ENCODE measurements at regions of chr12 and their contacts with region 1.

Region 1: DNA sequence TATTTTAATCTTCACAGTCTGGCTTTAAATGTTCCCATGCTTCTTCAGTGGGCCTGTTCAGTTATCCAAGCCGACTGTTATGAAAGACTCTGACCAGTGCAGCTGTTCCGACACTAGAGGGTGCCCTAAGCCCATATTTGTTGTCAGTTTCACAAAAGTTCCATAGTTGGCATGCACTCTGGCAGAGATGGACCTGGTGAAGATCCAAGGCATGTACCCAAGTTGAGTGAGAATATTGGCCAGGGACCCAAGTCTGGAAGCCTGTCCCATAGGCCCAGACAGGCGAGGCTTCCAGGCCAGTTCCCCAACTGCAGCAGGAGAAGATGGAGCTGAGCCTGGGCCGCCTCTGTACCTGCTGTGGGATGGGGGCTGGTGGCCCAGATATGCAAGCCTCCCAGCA is 27.4 kb upstream of the GUCY2C start:
- DNase-seq: peak; percentile 21 to 80 (median 46)
- ATAC-seq: peak; percentile 76
- H3K4me3 ChIP-seq: no peak overlapping the region
- H3K4me3 Mint-ChIP-seq: no peak overlapping the region
- H3K27ac ChIP-seq: no peak overlapping the region
- H3K27ac Mint-ChIP-seq: no peak overlapping the region
- H3K4me1 ChIP-seq: no peaks in the 10 kb centered on the region
- H3K4me1 Mint-ChIP-seq: peaks cover 5% of the 10 kb centered on the region
- H3K27me3 ChIP-seq: no peaks in the 10 kb centered on the region
- H3K27me3 Mint-ChIP-seq: peaks cover 11% of the 10 kb centered on the region
- CTCF ChIP-seq: peak; percentile 81

Region 2: DNA sequence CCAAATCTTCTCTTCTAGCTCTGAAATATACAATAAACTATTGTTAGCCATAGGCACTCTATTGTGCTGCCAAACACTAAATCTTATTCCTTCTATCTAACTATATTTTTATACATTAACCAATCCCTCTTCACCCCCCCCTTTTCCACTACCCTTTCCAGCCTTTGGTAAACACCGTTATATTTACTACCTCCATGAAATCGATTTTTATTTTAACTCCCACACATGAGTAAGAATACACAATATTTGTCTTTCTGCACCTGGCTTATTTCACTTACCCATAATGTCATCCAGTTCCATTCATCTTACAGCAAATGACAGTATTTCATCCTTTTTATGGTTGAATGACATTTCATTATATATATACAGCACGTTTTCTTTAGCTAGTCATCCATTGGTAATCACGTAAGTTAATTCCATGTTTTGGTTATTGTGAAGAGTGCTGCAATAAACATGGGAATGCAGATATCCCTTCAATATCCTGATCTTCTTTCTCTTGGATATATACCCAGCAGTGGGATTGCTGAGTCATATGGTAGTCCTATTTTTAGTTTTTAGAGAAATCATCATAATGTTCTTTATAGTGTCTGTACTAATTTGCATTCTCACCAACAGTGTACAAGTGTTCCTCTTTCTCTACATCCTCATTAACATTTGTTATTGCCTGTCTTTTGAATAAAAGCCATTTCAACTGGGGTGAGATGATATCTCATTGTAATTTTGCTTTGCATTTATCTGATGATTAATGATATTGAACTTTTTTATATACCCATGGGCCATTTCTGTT is 121.9 kb before region 1 on chr12:
- CTCF ChIA-PET with region 1: no interaction called
- POLR2A ChIA-PET with region 1: no interaction called
- intact Hi-C with region 1: no loop called
- DNase-seq: no peak
- ATAC-seq: no peak
- H3K4me3 ChIP-seq: no peak overlapping the region
- H3K4me3 Mint-ChIP-seq: no peak overlapping the region
- H3K27ac ChIP-seq: no peak overlapping the region
- H3K27ac Mint-ChIP-seq: no peak overlapping the region
- H3K4me1 ChIP-seq: no peaks in the 10 kb centered on the region
- H3K4me1 Mint-ChIP-seq: no peaks in the 10 kb centered on the region
- H3K27me3 ChIP-seq: no peaks in the 10 kb centered on the region
- H3K27me3 Mint-ChIP-seq: peaks cover 22% of the 10 kb centered on the region
- CTCF ChIP-seq: no peak

Region 3: DNA sequence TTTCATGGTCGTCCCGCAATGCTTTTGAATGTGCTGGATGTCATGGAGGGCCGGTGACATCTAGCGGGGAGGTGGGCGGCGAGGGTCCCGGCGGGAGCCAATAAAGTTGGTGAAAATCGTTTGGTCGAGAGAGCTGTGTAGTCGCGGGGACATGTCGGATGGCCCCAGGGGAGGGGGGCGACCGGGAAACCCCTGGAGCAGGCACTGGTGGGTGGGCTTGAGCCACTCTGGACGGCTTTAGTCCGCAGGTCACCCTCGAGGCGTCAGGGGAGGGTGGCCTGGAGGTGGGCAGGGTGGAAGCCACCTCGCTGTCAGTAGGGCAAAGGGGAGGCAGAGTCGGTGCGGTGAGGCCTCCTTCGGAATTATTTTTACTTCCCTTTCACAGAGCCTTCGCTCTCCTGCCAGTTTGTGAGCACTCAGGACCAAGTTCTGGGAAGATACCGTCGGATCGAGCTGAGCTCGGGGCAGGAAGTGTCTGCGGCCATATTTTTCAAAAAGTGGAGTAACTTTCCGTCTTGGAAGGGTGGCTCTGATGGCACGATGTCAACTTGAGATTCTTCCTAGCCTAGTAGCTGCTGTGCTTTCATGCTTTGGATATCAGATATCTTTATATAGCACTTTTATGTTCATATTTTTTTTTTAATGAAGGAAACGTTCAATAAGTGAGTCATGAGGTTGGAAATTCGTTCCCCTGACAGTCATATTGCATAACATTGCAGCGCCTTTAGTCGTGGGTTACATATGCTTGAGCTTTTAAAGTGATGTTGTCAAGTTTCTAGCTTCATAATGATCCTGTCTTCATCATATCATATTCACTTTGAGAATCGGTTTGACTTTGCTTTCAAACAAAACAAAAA is 51.4 kb after region 1 on chr12:
- CTCF ChIA-PET with region 1: interaction called, 3 read pairs
- POLR2A ChIA-PET with region 1: interaction called, 13 read pairs
- intact Hi-C with region 1: loop called in 1 of 2 experiments (anchors 5 kb)
- DNase-seq: peak in 11 of 14 experiments; percentile 2 to 56 (median 14)
- ATAC-seq: no peak
- H3K4me3 ChIP-seq: peak overlapping the region; percentile 83
- H3K4me3 Mint-ChIP-seq: peak overlapping the region; percentile 97
- H3K27ac ChIP-seq: peak overlapping the region; percentile 61 to 79
- H3K27ac Mint-ChIP-seq: peak overlapping the region; percentile 100
- H3K4me1 ChIP-seq: peaks cover 28% of the 10 kb centered on the region
- H3K4me1 Mint-ChIP-seq: peaks cover 63% of the 10 kb centered on the region
- H3K27me3 ChIP-seq: no peaks in the 10 kb centered on the region
- H3K27me3 Mint-ChIP-seq: no peaks in the 10 kb centered on the region
- CTCF ChIP-seq: no peak

Region 4: GRCh38 chr12:15151161-15152120 is 427.7 kb after region 1 on chr12:
- CTCF ChIA-PET with region 1: no interaction called
- POLR2A ChIA-PET with region 1: no interaction called
- intact Hi-C with region 1: no loop called
- DNase-seq: peak in 1 of 14 experiments; percentile 5
- ATAC-seq: no peak
- H3K4me3 ChIP-seq: no peak overlapping the region
- H3K4me3 Mint-ChIP-seq: no peak overlapping the region
- H3K27ac ChIP-seq: no peak overlapping the region
- H3K27ac Mint-ChIP-seq: no peak overlapping the region
- H3K4me1 ChIP-seq: no peaks in the 10 kb centered on the region
- H3K4me1 Mint-ChIP-seq: no peaks in the 10 kb centered on the region
- H3K27me3 ChIP-seq: no peaks in the 10 kb centered on the region
- H3K27me3 Mint-ChIP-seq: peaks cover 21% of the 10 kb centered on the region
- CTCF ChIP-seq: peak; percentile 48

Region 5: GRCh38 chr12:15220994-15221885 is 497.5 kb after region 1 on chr12 and contains the start of gene RERG:
- CTCF ChIA-PET with region 1: interaction called, 8 read pairs
- POLR2A ChIA-PET with region 1: no interaction called
- intact Hi-C with region 1: loop called (anchors 1 to 2 kb)
- DNase-seq: peak; percentile 50 to 86 (median 68)
- ATAC-seq: peak; percentile 99
- H3K4me3 ChIP-seq: peak within 1 kb of the TSS; percentile 49
- H3K4me3 Mint-ChIP-seq: peak within 1 kb of the TSS; percentile 71
- H3K27ac ChIP-seq: no peak within 1 kb of the TSS
- H3K27ac Mint-ChIP-seq: no peak within 1 kb of the TSS
- H3K4me1 ChIP-seq: peaks cover 10% of the 10 kb centered on the region
- H3K4me1 Mint-ChIP-seq: peaks cover 13% of the 10 kb centered on the region
- H3K27me3 ChIP-seq: peaks cover 7 to 34% of the 10 kb centered on the region in 2 experiments
- H3K27me3 Mint-ChIP-seq: peaks cover 42% of the 10 kb centered on the region
- CTCF ChIP-seq: peak; percentile 94
- total RNA-seq, gene RERG: not detected

Region 6: GRCh38 chr12:15522565-15523187 is 798.9 kb after region 1 on chr12:
- CTCF ChIA-PET with region 1: no interaction called
- POLR2A ChIA-PET with region 1: no interaction called
- intact Hi-C with region 1: loop called in 1 of 2 experiments (anchors 10 kb)
- DNase-seq: peak in 3 of 14 experiments; percentile 30 to 39 (median 34)
- ATAC-seq: no peak
- H3K4me3 ChIP-seq: no peak overlapping the region
- H3K4me3 Mint-ChIP-seq: no peak overlapping the region
- H3K27ac ChIP-seq: no peak overlapping the region
- H3K27ac Mint-ChIP-seq: no peak overlapping the region
- H3K4me1 ChIP-seq: no peaks in the 10 kb centered on the region
- H3K4me1 Mint-ChIP-seq: no peaks in the 10 kb centered on the region
- H3K27me3 ChIP-seq: peaks cover 2 to 4% of the 10 kb centered on the region in 2 experiments
- H3K27me3 Mint-ChIP-seq: peaks cover 53% of the 10 kb centered on the region
- CTCF ChIP-seq: peak; percentile 29

Region 7: DNA sequence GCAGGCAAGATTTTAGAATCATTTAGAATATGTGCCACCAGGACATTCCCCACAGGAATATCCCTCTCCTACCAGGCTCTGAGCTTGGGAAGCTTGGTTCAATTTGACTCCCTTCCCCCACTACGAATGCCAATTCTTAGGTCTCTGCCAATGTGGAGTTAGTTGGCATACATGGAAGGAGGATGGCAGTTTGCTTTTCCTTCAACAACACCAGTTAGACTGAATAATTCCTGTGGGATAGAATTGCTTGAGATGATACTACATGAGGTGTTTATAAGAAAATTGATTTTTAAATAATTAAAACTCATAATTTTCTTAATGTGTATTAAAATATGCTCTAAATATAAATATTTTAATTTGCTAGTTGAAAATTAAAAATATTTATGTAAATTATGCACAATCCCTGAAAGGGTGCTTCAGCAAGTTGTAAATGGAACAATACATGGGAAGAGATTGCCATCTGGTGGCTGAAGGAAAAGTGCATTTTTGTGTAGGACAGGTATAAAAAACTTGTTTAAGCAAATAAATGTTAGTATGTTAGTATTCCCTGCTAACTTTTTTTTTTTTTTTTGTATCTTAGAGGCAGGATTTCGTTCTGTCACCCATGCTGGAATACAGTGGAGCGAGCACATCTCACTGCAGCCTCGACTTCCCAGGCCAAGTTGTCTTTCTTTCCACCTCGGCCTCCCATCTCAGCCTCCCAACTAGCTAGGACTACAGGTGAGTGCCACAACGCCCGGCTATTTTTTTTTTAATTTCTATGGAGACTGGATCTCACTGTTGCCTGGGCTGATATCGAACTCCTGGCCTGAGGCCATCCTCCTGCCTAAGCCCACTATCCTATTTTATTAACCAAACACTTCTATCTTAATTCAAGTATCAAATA is 1132.6 kb after region 1 on chr12:
- CTCF ChIA-PET with region 1: no interaction called
- POLR2A ChIA-PET with region 1: no interaction called
- intact Hi-C with region 1: loop called (anchors 10 kb)
- DNase-seq: peak in 10 of 14 experiments; percentile 19 to 80 (median 40)
- ATAC-seq: peak; percentile 61
- H3K4me3 ChIP-seq: no peak overlapping the region
- H3K4me3 Mint-ChIP-seq: no peak overlapping the region
- H3K27ac ChIP-seq: no peak overlapping the region
- H3K27ac Mint-ChIP-seq: no peak overlapping the region
- H3K4me1 ChIP-seq: no peaks in the 10 kb centered on the region
- H3K4me1 Mint-ChIP-seq: no peaks in the 10 kb centered on the region
- H3K27me3 ChIP-seq: no peaks in the 10 kb centered on the region
- H3K27me3 Mint-ChIP-seq: peaks cover 28% of the 10 kb centered on the region
- CTCF ChIP-seq: peak; percentile 79

Measured in CD4-positive, alpha-beta T cell (primary cell).